Aorta (tissue), 5 donors: ENCODE measurements at regions of chr5 and their contacts with region 1.

Region 1: DNA sequence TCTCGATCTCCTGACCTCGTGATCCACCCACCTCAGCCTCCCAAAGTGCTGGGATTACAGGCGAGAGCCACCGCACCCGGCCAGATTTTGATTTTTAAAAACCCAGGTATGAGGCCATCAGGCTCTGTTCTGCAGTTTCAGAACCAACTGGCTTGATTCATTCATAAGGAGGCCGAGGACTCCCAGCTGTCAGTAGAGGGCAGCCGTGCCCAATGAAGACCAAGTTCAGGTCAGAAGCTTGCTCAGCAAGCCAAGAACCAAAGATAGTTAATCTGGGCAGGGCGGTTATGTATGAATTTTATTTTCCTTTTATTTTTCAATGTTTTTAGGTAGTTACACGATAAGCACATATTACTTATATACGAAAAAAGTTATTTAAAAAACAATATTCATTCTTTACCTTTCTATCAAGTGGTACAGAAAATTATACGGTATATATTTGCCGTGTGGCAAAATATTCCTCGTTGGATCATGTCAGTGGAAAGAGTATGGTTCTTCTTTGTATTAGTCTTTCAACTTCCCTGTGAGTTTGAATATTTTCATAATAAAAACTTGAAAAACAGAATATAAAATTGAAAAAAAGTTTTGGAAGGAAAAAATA is 18.0 kb downstream of the MGAT1 start:
- DNase-seq: peak; percentile 88 to 91
- ATAC-seq: peak; percentile 84
- H3K4me3 ChIP-seq: no peak overlapping the region
- H3K27ac ChIP-seq: no peak overlapping the region
- H3K4me1 ChIP-seq: peaks cover 0 to 5% of the 10 kb centered on the region in 2 donors
- H3K27me3 ChIP-seq: no peaks in the 10 kb centered on the region

Region 2: GRCh38 chr5:180831139-180832048 is 46.8 kb after region 1 on chr5:
- intact Hi-C with region 1: loop called in 1 of 2 experiments (anchors 10 kb)
- DNase-seq: peak; percentile 93 to 95
- ATAC-seq: peak; percentile 97
- H3K4me3 ChIP-seq: peak overlapping the region; percentile 51 to 90
- H3K27ac ChIP-seq: peak overlapping the region; percentile 49 to 85
- H3K4me1 ChIP-seq: no peaks in the 10 kb centered on the region
- H3K27me3 ChIP-seq: no peaks in the 10 kb centered on the region

Region 3: GRCh38 chr5:181092428-181092827 is 307.8 kb after region 1 on chr5:
- intact Hi-C with region 1: no loop called
- DNase-seq: no peak
- ATAC-seq: no peak
- H3K4me3 ChIP-seq: no peak overlapping the region
- H3K27ac ChIP-seq: no peak overlapping the region
- H3K4me1 ChIP-seq: no peaks in the 10 kb centered on the region
- H3K27me3 ChIP-seq: no peaks in the 10 kb centered on the region

Region 4: GRCh38 chr5:181159286-181159829 is 374.8 kb after region 1 on chr5:
- intact Hi-C with region 1: loop called in 1 of 2 experiments (anchors 10 kb)
- DNase-seq: peak; percentile 88 to 96
- ATAC-seq: peak; percentile 91
- H3K4me3 ChIP-seq: no peak overlapping the region
- H3K27ac ChIP-seq: no peak overlapping the region
- H3K4me1 ChIP-seq: no peaks in the 10 kb centered on the region
- H3K27me3 ChIP-seq: no peaks in the 10 kb centered on the region